Thyroid gland (tissue), 4 donors: ENCODE measurements at regions of chr21 and their contacts with region 1.

Region 1: GRCh38 chr21:42209819-42210479 is 9.0 kb upstream of the ABCG1 start:
- DNase-seq: no peak
- H3K4me3 ChIP-seq: no peak overlapping the region
- H3K27ac ChIP-seq: no peak overlapping the region
- H3K4me1 ChIP-seq: no peaks in the 10 kb centered on the region
- H3K27me3 ChIP-seq: no peaks in the 10 kb centered on the region
- CTCF ChIP-seq: no peak
- POLR2A ChIP-seq: no peak

Region 2: GRCh38 chr21:42164064-42164789 is 45.7 kb before region 1 on chr21:
- intact Hi-C with region 1: loop called (anchors 5 kb)
- DNase-seq: peak; percentile 46
- H3K4me3 ChIP-seq: no peak overlapping the region
- H3K27ac ChIP-seq: no peak overlapping the region
- H3K4me1 ChIP-seq: no peaks in the 10 kb centered on the region
- H3K27me3 ChIP-seq: no peaks in the 10 kb centered on the region
- CTCF ChIP-seq: peak in 4 of 6 experiments; percentile 26 to 39 (median 36)
- POLR2A ChIP-seq: no peak